ENCODE measurements at regions of chr10 and their contacts with region 1.

Region 1: GRCh38 chr10:43138021-43138756 is at the start of gene CSGALNACT2:
- DNase-seq: peak; percentile 93
- ATAC-seq: peak; percentile 84
- H3K4me3 ChIP-seq: peak within 1 kb of the TSS; percentile 75 to 98 (median 83)
- H3K4me3 Mint-ChIP-seq: peak within 1 kb of the TSS; percentile 99
- H3K27ac ChIP-seq: peak within 1 kb of the TSS; percentile 92 to 95
- H3K27ac Mint-ChIP-seq: peak within 1 kb of the TSS; percentile 98
- H3K4me1 ChIP-seq: peaks cover 31 to 32% of the 10 kb centered on the region in 2 donors
- H3K4me1 Mint-ChIP-seq: peaks cover 48% of the 10 kb centered on the region
- H3K27me3 ChIP-seq: no peaks in the 10 kb centered on the region
- H3K27me3 Mint-ChIP-seq: no peaks in the 10 kb centered on the region
- CTCF ChIP-seq: peak; percentile 5
- total RNA-seq, gene CSGALNACT2: 24.0 and 25.0 TPM in 2 replicates

Region 2: DNA sequence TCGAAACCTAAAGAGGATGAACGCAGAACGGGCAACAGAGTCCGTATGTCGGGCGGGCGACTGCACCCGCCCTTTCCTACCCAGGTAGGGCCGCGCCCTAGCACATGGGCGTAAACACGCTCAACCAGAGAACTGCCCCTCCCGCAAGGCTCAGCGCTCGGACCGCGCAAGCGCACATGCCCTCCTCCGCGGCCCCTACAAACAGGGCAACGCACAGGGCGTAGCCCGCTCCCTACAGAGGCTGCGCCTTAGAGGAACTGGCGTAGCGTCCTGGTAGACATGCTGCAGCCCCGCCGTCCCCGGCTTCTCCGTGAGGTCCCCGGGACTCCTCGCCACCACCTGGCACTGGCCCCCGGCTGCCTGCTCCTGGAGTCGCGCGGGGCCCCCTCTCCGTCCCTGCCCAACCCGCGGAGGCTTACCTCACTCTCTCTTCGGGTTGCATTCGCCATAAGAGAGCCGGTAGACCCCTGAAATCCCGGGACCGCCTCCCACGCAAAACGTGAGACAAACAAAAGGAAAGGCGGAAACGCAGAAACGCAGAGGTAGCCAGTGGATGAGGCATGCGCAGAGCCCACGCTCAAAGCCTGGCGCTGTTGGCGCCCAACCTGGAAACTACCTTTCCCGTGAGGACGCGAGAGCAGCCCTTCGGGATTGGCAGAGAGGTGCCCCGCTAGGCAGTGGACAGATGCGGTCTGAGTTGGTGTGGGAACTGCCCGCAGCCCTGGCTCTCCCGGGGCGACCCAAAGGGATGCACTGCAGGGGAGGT is 500.0 kb before region 1 on chr10 and contains the start of gene ZNF33B:
- CTCF ChIA-PET with region 1: no interaction called
- POLR2A ChIA-PET with region 1: no interaction called
- intact Hi-C with region 1: loop called (anchors 1 kb)
- DNase-seq: peak; percentile 95
- ATAC-seq: peak; percentile 94
- H3K4me3 ChIP-seq: peak within 1 kb of the TSS; percentile 86 to 97 (median 90)
- H3K4me3 Mint-ChIP-seq: peak within 1 kb of the TSS; percentile 99
- H3K27ac ChIP-seq: peak within 1 kb of the TSS; percentile 87 to 92
- H3K27ac Mint-ChIP-seq: peak within 1 kb of the TSS; percentile 99
- H3K4me1 ChIP-seq: peaks cover 14 to 15% of the 10 kb centered on the region in 2 donors
- H3K4me1 Mint-ChIP-seq: peaks cover 40% of the 10 kb centered on the region
- H3K27me3 ChIP-seq: no peaks in the 10 kb centered on the region
- H3K27me3 Mint-ChIP-seq: no peaks in the 10 kb centered on the region
- CTCF ChIP-seq: no peak
- total RNA-seq, gene ZNF33B: 66.6 and 66.9 TPM in 2 replicates

Region 3: DNA sequence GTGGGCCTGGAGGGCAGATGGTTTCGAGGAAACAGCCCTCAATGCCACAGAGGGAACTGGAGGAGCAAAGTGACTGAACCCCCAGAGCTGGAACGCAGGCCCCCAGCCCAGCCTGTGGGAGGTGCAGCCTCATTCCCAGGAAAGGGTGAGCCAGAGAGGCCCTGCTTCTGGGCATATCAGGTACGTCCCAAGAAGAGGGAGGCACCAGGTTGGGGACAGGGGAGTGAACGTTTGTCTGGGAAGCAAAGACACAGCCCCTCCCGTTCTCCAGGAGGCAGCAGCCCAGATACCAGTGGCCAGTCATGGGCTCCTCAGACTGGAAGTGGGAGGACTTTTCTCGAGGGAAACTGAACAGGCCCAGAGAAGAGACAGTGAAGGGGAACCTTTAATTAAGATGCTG is 135.6 kb before region 1 on chr10:
- CTCF ChIA-PET with region 1: no interaction called
- POLR2A ChIA-PET with region 1: no interaction called
- intact Hi-C with region 1: no loop called
- DNase-seq: no peak
- ATAC-seq: no peak
- H3K4me3 ChIP-seq: no peak overlapping the region
- H3K4me3 Mint-ChIP-seq: no peak overlapping the region
- H3K27ac ChIP-seq: no peak overlapping the region
- H3K27ac Mint-ChIP-seq: no peak overlapping the region
- H3K4me1 ChIP-seq: no peaks in the 10 kb centered on the region
- H3K4me1 Mint-ChIP-seq: no peaks in the 10 kb centered on the region
- H3K27me3 ChIP-seq: no peaks in the 10 kb centered on the region
- H3K27me3 Mint-ChIP-seq: no peaks in the 10 kb centered on the region
- CTCF ChIP-seq: no peak

Region 4: GRCh38 chr10:43105102-43105785 is 32.9 kb before region 1 on chr10:
- CTCF ChIA-PET with region 1: interaction called, 4 read pairs
- POLR2A ChIA-PET with region 1: interaction called, 5 read pairs
- intact Hi-C with region 1: loop called (anchors 1 kb)
- DNase-seq: peak; percentile 85
- ATAC-seq: peak; percentile 95
- H3K4me3 ChIP-seq: peak overlapping the region; percentile 55 to 82 (median 65)
- H3K4me3 Mint-ChIP-seq: peak overlapping the region; percentile 90
- H3K27ac ChIP-seq: no peak overlapping the region
- H3K27ac Mint-ChIP-seq: peak overlapping the region; percentile 50
- H3K4me1 ChIP-seq: peaks cover 15 to 25% of the 10 kb centered on the region in 2 donors
- H3K4me1 Mint-ChIP-seq: peaks cover 17% of the 10 kb centered on the region
- H3K27me3 ChIP-seq: peaks cover 0 to 32% (median 2%) of the 10 kb centered on the region in 4 experiments
- H3K27me3 Mint-ChIP-seq: peaks cover 18% of the 10 kb centered on the region
- CTCF ChIP-seq: peak; percentile 99

Region 5: DNA sequence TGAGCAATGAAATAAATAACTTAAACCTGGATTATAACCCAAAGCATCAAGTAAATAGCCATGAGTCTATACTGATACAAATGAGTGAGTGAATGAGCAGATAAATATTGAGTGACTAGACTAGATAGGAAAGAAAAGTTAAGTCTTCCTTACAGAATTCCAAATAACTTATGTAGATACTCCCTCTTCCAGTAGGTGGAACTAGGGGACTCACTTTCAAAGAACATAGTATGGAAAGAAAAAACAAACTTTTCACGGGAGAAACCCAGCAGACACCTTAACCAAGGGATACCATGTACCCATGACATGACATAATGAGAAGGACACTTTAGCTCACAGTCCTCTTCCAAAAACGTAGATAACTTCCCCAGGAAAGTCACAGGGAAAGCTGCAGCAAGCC is 32.3 kb after region 1 on chr10:
- CTCF ChIA-PET with region 1: no interaction called
- POLR2A ChIA-PET with region 1: no interaction called
- intact Hi-C with region 1: no loop called
- DNase-seq: no peak
- ATAC-seq: no peak
- H3K4me3 ChIP-seq: no peak overlapping the region
- H3K4me3 Mint-ChIP-seq: no peak overlapping the region
- H3K27ac ChIP-seq: no peak overlapping the region
- H3K27ac Mint-ChIP-seq: no peak overlapping the region
- H3K4me1 ChIP-seq: no peaks in the 10 kb centered on the region
- H3K4me1 Mint-ChIP-seq: no peaks in the 10 kb centered on the region
- H3K27me3 ChIP-seq: no peaks in the 10 kb centered on the region
- H3K27me3 Mint-ChIP-seq: no peaks in the 10 kb centered on the region
- CTCF ChIP-seq: no peak

Region 6: DNA sequence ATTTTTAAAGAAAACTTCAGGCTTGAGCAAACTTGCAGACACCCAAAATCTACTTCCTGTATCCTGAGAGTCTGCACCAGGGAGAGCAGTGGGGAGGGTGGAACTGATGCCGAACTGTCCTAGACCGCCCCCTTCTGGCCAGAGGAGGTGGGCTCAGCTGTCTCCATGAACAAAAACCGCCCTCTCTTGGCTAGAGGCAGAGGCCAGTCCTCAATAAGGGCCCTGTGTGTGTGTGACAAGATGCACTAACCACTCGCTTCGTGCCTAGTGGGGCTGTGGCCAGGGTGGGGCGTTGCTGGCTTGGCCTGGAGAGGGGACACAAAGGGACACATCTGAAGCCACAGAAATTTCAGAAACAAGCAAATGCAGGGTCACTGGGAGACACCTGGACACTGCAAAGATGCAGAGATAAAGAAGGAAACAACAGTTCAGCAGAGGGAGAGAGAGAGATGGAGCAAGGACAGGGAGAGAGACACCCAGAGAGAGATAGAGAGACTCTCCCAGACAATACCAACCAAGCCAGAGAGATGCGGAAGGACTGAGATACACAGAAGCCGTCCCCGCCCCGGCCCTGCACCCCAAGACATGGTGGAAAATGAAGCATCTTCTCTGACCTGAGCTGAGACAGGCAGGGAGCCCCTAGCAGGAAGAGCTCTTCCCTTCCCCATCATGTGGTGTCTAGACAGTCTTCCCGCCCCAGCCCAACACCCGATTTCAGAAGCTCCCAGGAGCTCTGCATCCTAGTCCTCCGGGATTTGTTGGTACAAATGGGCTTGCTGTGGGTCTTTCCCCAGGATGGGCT is 210.5 kb after region 1 on chr10:
- CTCF ChIA-PET with region 1: no interaction called
- POLR2A ChIA-PET with region 1: no interaction called
- intact Hi-C with region 1: loop called (anchors 5 kb)
- DNase-seq: peak; percentile 86
- ATAC-seq: peak; percentile 100
- H3K4me3 ChIP-seq: no peak overlapping the region
- H3K4me3 Mint-ChIP-seq: no peak overlapping the region
- H3K27ac ChIP-seq: no peak overlapping the region
- H3K27ac Mint-ChIP-seq: no peak overlapping the region
- H3K4me1 ChIP-seq: peaks cover 8 to 15% of the 10 kb centered on the region in 2 donors
- H3K4me1 Mint-ChIP-seq: peaks cover 6% of the 10 kb centered on the region
- H3K27me3 ChIP-seq: peaks cover 0 to 14% (median 4%) of the 10 kb centered on the region in 4 experiments
- H3K27me3 Mint-ChIP-seq: peaks cover 14% of the 10 kb centered on the region
- CTCF ChIP-seq: peak; percentile 87